IMR-90 (cell line): ENCODE measurements at regions of chr1 and their contacts with region 1.

Region 1: DNA sequence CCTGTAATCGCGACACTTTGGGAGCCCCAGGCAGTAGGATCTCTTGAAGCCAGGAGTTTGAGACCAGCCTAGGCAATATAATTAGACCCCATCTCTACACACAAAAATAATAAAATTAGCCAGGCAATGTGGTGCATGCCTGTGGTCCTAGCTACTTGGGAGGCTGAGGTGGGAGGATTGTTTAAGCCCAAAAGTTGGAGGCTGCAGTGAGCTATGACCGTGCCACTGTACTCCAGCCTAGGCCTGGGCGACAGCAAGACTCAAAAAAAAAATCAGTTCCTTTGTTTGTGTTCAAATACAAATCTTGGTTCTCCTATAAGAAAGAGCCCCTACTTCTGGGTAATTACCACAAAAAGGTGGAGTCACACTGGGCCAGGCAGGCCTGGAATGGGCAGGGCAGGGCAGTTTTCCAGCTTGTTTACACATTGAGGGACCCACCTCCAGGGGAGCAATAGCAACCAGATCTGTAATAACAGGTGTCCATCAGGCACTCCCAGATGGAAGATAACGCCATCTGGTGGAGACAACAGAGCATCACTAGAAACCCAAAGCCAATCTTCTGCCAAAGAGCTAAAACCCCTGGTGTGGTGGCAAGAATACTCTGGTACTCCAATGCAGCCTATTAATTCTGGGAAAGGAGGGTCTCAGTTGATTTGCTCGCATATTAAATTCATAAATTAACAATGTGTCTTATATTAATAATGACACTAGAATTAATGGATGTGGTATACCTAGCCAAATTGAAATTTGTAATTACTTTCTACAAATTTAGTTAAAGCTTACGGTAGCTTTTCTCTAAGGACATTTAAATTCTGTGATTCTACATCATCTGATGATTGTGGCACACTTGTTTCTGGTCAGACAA is 13.2 kb downstream of the PPP1R15B start:
- DNase-seq: peak; percentile 69
- ATAC-seq: peak; percentile 83
- H3K4me3 ChIP-seq: no peak overlapping the region
- H3K27ac ChIP-seq: no peak overlapping the region
- H3K4me1 ChIP-seq: no peaks in the 10 kb centered on the region
- H3K27me3 ChIP-seq: no peaks in the 10 kb centered on the region
- CTCF ChIP-seq: peak; percentile 71
- POLR2A ChIP-seq: no peak
- RAD21 ChIP-seq: peak; percentile 51

Region 2: GRCh38 chr1:203861379-203862184 is 536.9 kb before region 1 on chr1 and contains the start of gene SNRPE:
- CTCF ChIA-PET with region 1: no interaction called
- POLR2A ChIA-PET with region 1: no interaction called
- dilution Hi-C with region 1: loop called (anchors 25 kb)
- in situ Hi-C with region 1: no loop called
- intact Hi-C with region 1: no loop called
- DNase-seq: peak; percentile 98
- ATAC-seq: peak; percentile 96
- H3K4me3 ChIP-seq: peak within 1 kb of the TSS; percentile 75
- H3K27ac ChIP-seq: peak within 1 kb of the TSS; percentile 92
- H3K4me1 ChIP-seq: peaks cover 8% of the 10 kb centered on the region; the same call in 1 of the 2 replicates
- H3K27me3 ChIP-seq: no peaks in the 10 kb centered on the region
- CTCF ChIP-seq: peak; percentile 90
- POLR2A ChIP-seq: peak; percentile 84
- RAD21 ChIP-seq: peak; percentile 95
- total RNA-seq, gene SNRPE: 43.6 and 118 TPM in 2 replicates

Region 3: GRCh38 chr1:204469304-204469703 is 70.9 kb after region 1 on chr1:
- CTCF ChIA-PET with region 1: no interaction called
- POLR2A ChIA-PET with region 1: no interaction called
- dilution Hi-C with region 1: no loop called
- in situ Hi-C with region 1: no loop called
- intact Hi-C with region 1: no loop called
- DNase-seq: no peak
- ATAC-seq: no peak
- H3K4me3 ChIP-seq: no peak overlapping the region
- H3K27ac ChIP-seq: no peak overlapping the region
- H3K4me1 ChIP-seq: no peaks in the 10 kb centered on the region; the same call in 1 of the 2 replicates
- H3K27me3 ChIP-seq: peaks cover 4% of the 10 kb centered on the region; the same call in 1 of the 2 replicates
- CTCF ChIP-seq: no peak
- POLR2A ChIP-seq: no peak
- RAD21 ChIP-seq: no peak

Region 4: GRCh38 chr1:204600968-204601367 is 202.5 kb after region 1 on chr1:
- CTCF ChIA-PET with region 1: no interaction called
- POLR2A ChIA-PET with region 1: no interaction called
- dilution Hi-C with region 1: no loop called
- in situ Hi-C with region 1: no loop called
- intact Hi-C with region 1: no loop called
- DNase-seq: no peak
- ATAC-seq: no peak
- H3K4me3 ChIP-seq: no peak overlapping the region
- H3K27ac ChIP-seq: no peak overlapping the region
- H3K4me1 ChIP-seq: no peaks in the 10 kb centered on the region
- H3K27me3 ChIP-seq: peaks cover 36% of the 10 kb centered on the region
- CTCF ChIP-seq: no peak
- POLR2A ChIP-seq: no peak
- RAD21 ChIP-seq: no peak

Region 5: DNA sequence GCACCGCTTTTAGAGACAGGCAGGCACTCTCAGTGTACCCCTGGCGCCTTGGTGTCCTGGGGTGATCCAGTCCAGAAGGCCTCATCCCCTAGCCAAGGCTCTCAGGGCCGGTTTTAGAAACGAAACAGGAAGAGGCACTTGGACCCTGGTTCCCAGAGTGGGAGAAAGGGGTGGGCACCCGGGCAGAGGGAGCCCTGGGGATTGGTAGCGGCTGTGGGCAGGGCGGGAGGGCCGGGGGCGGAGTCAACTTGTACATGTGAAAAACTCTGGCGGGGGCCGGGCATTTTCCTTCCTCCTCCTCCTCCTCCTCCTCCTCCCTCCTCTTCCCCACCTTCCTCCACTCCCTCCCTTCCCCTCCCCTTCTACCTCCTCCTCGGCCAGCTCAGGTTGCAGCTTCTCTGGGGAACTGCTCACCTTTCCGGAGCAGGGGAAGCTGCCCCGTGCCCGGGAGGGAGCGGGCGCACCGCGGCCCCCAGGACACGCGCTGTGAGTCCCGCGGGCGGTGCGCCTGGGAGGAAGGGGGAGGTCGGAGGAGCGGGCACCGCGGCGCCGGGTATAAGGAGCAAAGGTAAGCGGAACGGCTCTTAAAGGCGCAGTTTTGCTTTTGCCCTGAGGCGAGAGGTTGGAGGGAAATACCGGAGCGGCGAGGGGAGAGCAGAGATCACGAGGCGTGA is 1106.0 kb after region 1 on chr1 and contains the start of gene CDK18:
- CTCF ChIA-PET with region 1: no interaction called
- POLR2A ChIA-PET with region 1: no interaction called
- dilution Hi-C with region 1: no loop called
- in situ Hi-C with region 1: no loop called
- intact Hi-C with region 1: no loop called
- DNase-seq: no peak
- ATAC-seq: peak; percentile 80
- H3K4me3 ChIP-seq: peak within 1 kb of the TSS; percentile 56
- H3K27ac ChIP-seq: no peak within 1 kb of the TSS
- H3K4me1 ChIP-seq: peaks cover 2% of the 10 kb centered on the region; the same call in 1 of the 2 replicates
- H3K27me3 ChIP-seq: peaks cover 64% of the 10 kb centered on the region
- CTCF ChIP-seq: no peak
- POLR2A ChIP-seq: no peak
- RAD21 ChIP-seq: no peak
- total RNA-seq, gene CDK18: 0.18 and 0.28 TPM in 2 replicates